ENCODE measurements at regions of chr1 and their contacts with region 1.

Region 1: DNA sequence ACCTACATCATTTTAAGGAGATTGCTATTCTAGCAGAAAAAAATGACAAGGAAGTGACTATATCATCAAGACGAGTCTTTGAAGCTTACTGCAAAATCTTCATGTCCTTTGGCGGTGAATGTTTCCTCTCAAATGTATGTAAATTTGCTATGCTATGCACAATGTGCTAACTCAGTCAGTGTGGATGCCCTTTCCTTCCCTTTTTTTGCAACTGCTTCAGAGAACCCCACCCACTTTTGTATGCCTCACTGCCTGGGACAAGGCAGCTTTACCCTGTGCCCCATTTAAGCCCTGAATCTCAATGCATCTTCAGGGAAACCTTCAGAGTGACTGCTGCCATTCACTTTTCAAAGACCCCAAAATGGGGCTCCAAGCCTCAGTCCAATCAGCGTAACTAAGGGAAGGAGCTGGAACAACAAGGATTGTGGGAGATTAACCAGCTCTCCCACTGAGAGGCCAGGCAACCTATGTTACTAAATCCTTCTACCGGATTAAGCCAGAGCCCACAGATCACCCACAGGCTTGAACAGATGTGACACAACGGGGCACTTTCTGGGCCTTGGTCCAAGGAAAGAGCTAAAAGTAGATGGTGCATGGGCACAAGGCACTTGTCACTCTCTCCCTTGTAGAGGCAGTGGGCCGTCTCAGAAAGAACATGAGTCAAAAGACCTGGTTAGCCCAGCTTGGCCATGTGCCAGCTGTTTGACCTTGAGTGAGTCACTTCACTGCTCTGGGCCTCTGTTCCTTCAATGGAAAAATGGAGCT is 154.4 kb downstream of the PLPP3 start:
- H3K4me3 Mint-ChIP-seq: no peak overlapping the region
- H3K27ac Mint-ChIP-seq: peak overlapping the region; percentile 82
- H3K4me1 Mint-ChIP-seq: peaks cover 35% of the 10 kb centered on the region
- H3K27me3 Mint-ChIP-seq: no peaks in the 10 kb centered on the region

Region 2: GRCh38 chr1:56477164-56478111 is 52.5 kb after region 1 on chr1:
- intact Hi-C with region 1: loop called (anchors 10 kb)
- H3K4me3 Mint-ChIP-seq: peak overlapping the region; percentile 77
- H3K27ac Mint-ChIP-seq: no peak overlapping the region
- H3K4me1 Mint-ChIP-seq: peaks cover 47% of the 10 kb centered on the region
- H3K27me3 Mint-ChIP-seq: peaks cover 59% of the 10 kb centered on the region